ENCODE measurements at regions of chr1 and their contacts with region 1.

Region 1: DNA sequence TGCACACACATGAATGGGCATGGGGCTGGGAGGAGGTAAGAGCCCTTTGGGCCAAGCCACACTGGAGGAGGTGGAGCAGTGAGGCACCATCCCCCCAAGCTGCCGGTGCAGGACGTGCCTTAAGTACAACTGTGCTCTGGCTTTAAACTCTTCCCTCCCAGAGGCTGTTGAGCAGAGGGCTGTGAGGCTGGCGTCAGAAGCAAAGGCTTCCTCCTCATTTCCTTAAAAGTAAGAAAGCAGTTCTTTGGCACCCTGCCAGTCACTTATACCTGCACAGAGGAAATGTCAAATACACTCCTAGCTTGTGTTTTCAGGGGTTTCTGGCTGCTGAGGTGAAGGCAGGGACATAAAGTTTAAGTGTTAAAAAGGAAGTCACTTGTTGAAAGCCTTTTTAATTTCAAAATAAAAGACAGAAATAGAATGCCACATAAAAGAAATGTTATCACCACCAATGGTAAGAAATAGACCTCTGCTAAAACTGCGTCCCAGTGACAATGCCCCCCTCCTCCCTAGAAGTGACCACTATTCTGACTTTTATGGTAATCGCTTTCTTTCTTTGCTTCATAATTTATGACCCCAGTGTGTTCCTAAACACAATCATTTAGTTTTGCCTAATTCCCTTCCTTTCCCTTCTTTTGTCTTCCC is 33.0 kb downstream of the LAMC2 start:
- DNase-seq: peak in 1 of 2 donors; percentile 70
- H3K4me3 ChIP-seq: no peak overlapping the region
- H3K27ac ChIP-seq: peak overlapping the region; percentile 47 to 69
- H3K4me1 ChIP-seq: peaks cover 6 to 20% of the 10 kb centered on the region in 2 donors
- H3K27me3 ChIP-seq: no peaks in the 10 kb centered on the region
- CTCF ChIP-seq: no peak

Region 2: DNA sequence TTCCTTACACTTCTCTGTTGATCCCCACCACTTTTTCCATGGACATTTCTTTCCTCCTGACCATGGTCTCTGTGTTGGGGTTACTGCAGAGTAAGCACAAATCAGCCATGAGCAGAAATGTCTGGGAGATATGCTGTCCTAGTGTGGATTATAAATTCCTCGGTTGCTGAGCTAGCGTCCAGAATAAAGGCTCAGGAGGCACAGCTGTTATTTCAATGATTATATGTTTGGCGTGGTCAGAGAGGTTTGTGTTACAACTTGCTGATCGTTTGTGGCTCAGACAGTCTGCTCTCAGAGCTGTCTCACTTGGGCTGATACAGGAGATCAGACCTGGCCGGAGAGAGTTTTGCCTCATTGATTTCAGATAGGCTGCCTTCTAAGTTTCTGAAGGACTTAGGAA is 70.5 kb before region 1 on chr1:
- intact Hi-C with region 1: loop called (anchors 2 kb)
- DNase-seq: no peak
- H3K4me3 ChIP-seq: peak overlapping the region in 1 of 2 donors; percentile 4
- H3K27ac ChIP-seq: peak overlapping the region; percentile 35 to 59
- H3K4me1 ChIP-seq: peaks cover 0 to 13% of the 10 kb centered on the region in 2 donors
- H3K27me3 ChIP-seq: no peaks in the 10 kb centered on the region
- CTCF ChIP-seq: no peak